ENCODE measurements at regions of chr2 and their contacts with region 1.

Region 1: GRCh38 chr2:9763356-9764152 is 79.7 kb upstream of the TAF1B start:
- DNase-seq: peak; percentile 77
- ATAC-seq: peak; percentile 84
- H3K4me3 ChIP-seq: no peak overlapping the region
- H3K27ac ChIP-seq: peak overlapping the region; percentile 67
- H3K4me1 ChIP-seq: peaks cover 27% of the 10 kb centered on the region
- H3K27me3 ChIP-seq: no peaks in the 10 kb centered on the region
- CTCF ChIP-seq: no peak

Region 2: GRCh38 chr2:9782197-9782719 is 18.7 kb after region 1 on chr2:
- CTCF ChIA-PET with region 1: no interaction called
- POLR2A ChIA-PET with region 1: no interaction called
- intact Hi-C with region 1: loop called (anchors 2 kb)
- DNase-seq: peak; percentile 81
- ATAC-seq: peak; percentile 87
- H3K4me3 ChIP-seq: peak overlapping the region; percentile 61
- H3K27ac ChIP-seq: peak overlapping the region; percentile 89
- H3K4me1 ChIP-seq: peaks cover 14% of the 10 kb centered on the region
- H3K27me3 ChIP-seq: no peaks in the 10 kb centered on the region
- CTCF ChIP-seq: peak; percentile 67

Measured in PC-3 (cell line).